CD8-positive, alpha-beta T cell (primary cell): ENCODE measurements at regions of chr1 and their contacts with region 1.

Region 1: GRCh38 chr1:28877132-28877781 is 37.1 kb upstream of the EPB41 start:
- DNase-seq: peak; percentile 49 to 87 (median 80)
- ATAC-seq: peak; percentile 83
- H3K4me3 ChIP-seq: no peak overlapping the region
- H3K4me3 Mint-ChIP-seq: no peak overlapping the region
- H3K27ac ChIP-seq: no peak overlapping the region
- H3K27ac Mint-ChIP-seq: no peak overlapping the region
- H3K4me1 ChIP-seq: no peaks in the 10 kb centered on the region
- H3K4me1 Mint-ChIP-seq: peaks cover 10% of the 10 kb centered on the region
- H3K27me3 ChIP-seq: no peaks in the 10 kb centered on the region
- H3K27me3 Mint-ChIP-seq: peaks cover 9% of the 10 kb centered on the region
- CTCF ChIP-seq: peak; percentile 97

Region 2: GRCh38 chr1:28088168-28088961 is 788.9 kb before region 1 on chr1 and contains the start of gene EYA3:
- CTCF ChIA-PET with region 1: interaction called, 6 read pairs
- POLR2A ChIA-PET with region 1: no interaction called
- intact Hi-C with region 1: loop called (anchors 2 to 5 kb)
- DNase-seq: peak; percentile 97 to 100 (median 99)
- ATAC-seq: peak; percentile 95
- H3K4me3 ChIP-seq: peak within 1 kb of the TSS; percentile 72 to 84
- H3K4me3 Mint-ChIP-seq: peak within 1 kb of the TSS; percentile 85
- H3K27ac ChIP-seq: peak within 1 kb of the TSS; percentile 58 to 89
- H3K27ac Mint-ChIP-seq: peak within 1 kb of the TSS; percentile 97
- H3K4me1 ChIP-seq: peaks cover 25% of the 10 kb centered on the region
- H3K4me1 Mint-ChIP-seq: peaks cover 45% of the 10 kb centered on the region
- H3K27me3 ChIP-seq: no peaks in the 10 kb centered on the region
- H3K27me3 Mint-ChIP-seq: peaks cover 3% of the 10 kb centered on the region
- CTCF ChIP-seq: no peak
- total RNA-seq, gene EYA3: 4.9 to 5.2 TPM

Region 3: DNA sequence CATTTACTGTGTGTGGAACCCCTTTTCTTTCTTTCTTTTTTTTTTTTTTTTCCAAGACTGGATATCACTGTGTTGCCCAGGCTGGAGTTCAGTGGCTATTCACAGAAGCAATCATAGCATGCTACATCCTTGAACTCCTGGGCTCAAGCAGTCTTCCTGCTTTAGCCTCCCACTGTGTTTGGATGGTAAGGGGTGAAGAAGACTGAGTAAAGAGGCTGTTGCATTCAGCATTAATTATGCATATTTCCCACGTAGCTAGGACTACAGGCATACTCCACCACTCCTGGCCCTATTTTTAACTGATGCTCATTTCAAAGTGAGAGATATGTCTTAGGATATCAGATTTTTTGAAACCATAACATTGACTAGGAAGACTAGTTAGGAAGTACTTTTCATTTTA is 468.2 kb before region 1 on chr1:
- CTCF ChIA-PET with region 1: interaction called, 12 read pairs
- POLR2A ChIA-PET with region 1: no interaction called
- intact Hi-C with region 1: loop called (anchors 1 kb)
- DNase-seq: no peak
- ATAC-seq: no peak
- H3K4me3 ChIP-seq: no peak overlapping the region
- H3K4me3 Mint-ChIP-seq: no peak overlapping the region
- H3K27ac ChIP-seq: no peak overlapping the region
- H3K27ac Mint-ChIP-seq: no peak overlapping the region
- H3K4me1 ChIP-seq: no peaks in the 10 kb centered on the region
- H3K4me1 Mint-ChIP-seq: peaks cover 11% of the 10 kb centered on the region
- H3K27me3 ChIP-seq: no peaks in the 10 kb centered on the region
- H3K27me3 Mint-ChIP-seq: no peaks in the 10 kb centered on the region
- CTCF ChIP-seq: no peak

Region 4: GRCh38 chr1:28642847-28643635 is 234.2 kb before region 1 on chr1 and contains the start of gene TAF12:
- CTCF ChIA-PET with region 1: interaction called, 13 read pairs
- POLR2A ChIA-PET with region 1: interaction called, 6 read pairs
- intact Hi-C with region 1: loop called (anchors 1 kb)
- DNase-seq: peak; percentile 87 to 98 (median 91)
- ATAC-seq: peak; percentile 79
- H3K4me3 ChIP-seq: peak within 1 kb of the TSS; percentile 62 to 92
- H3K4me3 Mint-ChIP-seq: peak within 1 kb of the TSS; percentile 100
- H3K27ac ChIP-seq: peak within 1 kb of the TSS; percentile 88 to 90
- H3K27ac Mint-ChIP-seq: peak within 1 kb of the TSS; percentile 99
- H3K4me1 ChIP-seq: peaks cover 34% of the 10 kb centered on the region
- H3K4me1 Mint-ChIP-seq: peaks cover 54% of the 10 kb centered on the region
- H3K27me3 ChIP-seq: no peaks in the 10 kb centered on the region
- H3K27me3 Mint-ChIP-seq: no peaks in the 10 kb centered on the region
- CTCF ChIP-seq: peak; percentile 32
- total RNA-seq, gene TAF12: 7.7 to 8.5 TPM

Region 5: DNA sequence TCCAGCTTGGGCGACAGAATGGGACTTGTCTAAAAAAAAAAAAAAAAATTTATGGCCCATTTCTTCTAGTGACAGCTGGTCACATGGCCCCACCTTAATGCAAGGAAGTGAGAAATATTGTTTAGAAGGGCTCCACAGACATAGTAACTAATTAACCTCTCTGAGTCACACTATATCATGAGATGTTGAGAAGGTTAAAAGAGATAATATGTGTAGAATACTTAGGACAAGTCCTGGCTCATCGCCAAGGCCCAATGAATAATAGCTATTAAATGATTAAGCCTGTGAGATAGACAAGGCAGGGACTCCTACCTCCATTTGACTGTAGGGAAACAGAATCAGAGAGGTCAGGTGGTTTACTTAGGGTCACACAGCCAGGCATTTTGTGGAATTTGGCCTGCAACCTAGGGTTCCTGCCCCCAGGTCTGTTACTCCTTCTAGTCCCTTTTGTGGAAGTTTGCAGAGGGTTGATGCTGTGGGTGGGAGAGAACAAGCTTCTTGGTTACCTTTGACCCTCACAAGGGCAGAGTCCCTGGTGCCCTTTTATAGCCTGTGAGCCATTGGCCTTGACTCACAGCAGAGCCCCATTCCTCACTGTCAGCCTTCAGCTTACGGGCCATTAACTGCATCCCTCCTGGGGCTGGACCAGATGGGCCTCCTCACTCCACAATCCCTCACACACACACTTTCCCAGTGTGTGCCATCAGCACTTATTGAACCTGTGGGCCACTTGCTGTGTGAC is 16.8 kb before region 1 on chr1:
- CTCF ChIA-PET with region 1: interaction called, 21 read pairs
- POLR2A ChIA-PET with region 1: no interaction called
- intact Hi-C with region 1: no loop called
- DNase-seq: no peak
- ATAC-seq: no peak
- H3K4me3 ChIP-seq: no peak overlapping the region
- H3K4me3 Mint-ChIP-seq: no peak overlapping the region
- H3K27ac ChIP-seq: no peak overlapping the region
- H3K27ac Mint-ChIP-seq: no peak overlapping the region
- H3K4me1 ChIP-seq: no peaks in the 10 kb centered on the region
- H3K4me1 Mint-ChIP-seq: no peaks in the 10 kb centered on the region
- H3K27me3 ChIP-seq: no peaks in the 10 kb centered on the region
- H3K27me3 Mint-ChIP-seq: no peaks in the 10 kb centered on the region
- CTCF ChIP-seq: no peak

Region 6: GRCh38 chr1:29050166-29050565 is 172.9 kb after region 1 on chr1:
- CTCF ChIA-PET with region 1: interaction called, 16 read pairs
- POLR2A ChIA-PET with region 1: no interaction called
- intact Hi-C with region 1: no loop called
- DNase-seq: no peak
- ATAC-seq: no peak
- H3K4me3 ChIP-seq: no peak overlapping the region
- H3K4me3 Mint-ChIP-seq: no peak overlapping the region
- H3K27ac ChIP-seq: no peak overlapping the region
- H3K27ac Mint-ChIP-seq: no peak overlapping the region
- H3K4me1 ChIP-seq: no peaks in the 10 kb centered on the region
- H3K4me1 Mint-ChIP-seq: no peaks in the 10 kb centered on the region
- H3K27me3 ChIP-seq: no peaks in the 10 kb centered on the region
- H3K27me3 Mint-ChIP-seq: no peaks in the 10 kb centered on the region
- CTCF ChIP-seq: no peak

Region 7: GRCh38 chr1:29532751-29533150 is 655.5 kb after region 1 on chr1:
- CTCF ChIA-PET with region 1: no interaction called
- POLR2A ChIA-PET with region 1: no interaction called
- intact Hi-C with region 1: no loop called
- DNase-seq: no peak
- ATAC-seq: no peak
- H3K4me3 ChIP-seq: no peak overlapping the region
- H3K4me3 Mint-ChIP-seq: no peak overlapping the region
- H3K27ac ChIP-seq: no peak overlapping the region
- H3K27ac Mint-ChIP-seq: no peak overlapping the region
- H3K4me1 ChIP-seq: no peaks in the 10 kb centered on the region
- H3K4me1 Mint-ChIP-seq: no peaks in the 10 kb centered on the region
- H3K27me3 ChIP-seq: no peaks in the 10 kb centered on the region
- H3K27me3 Mint-ChIP-seq: peaks cover 5% of the 10 kb centered on the region
- CTCF ChIP-seq: no peak

Region 8: DNA sequence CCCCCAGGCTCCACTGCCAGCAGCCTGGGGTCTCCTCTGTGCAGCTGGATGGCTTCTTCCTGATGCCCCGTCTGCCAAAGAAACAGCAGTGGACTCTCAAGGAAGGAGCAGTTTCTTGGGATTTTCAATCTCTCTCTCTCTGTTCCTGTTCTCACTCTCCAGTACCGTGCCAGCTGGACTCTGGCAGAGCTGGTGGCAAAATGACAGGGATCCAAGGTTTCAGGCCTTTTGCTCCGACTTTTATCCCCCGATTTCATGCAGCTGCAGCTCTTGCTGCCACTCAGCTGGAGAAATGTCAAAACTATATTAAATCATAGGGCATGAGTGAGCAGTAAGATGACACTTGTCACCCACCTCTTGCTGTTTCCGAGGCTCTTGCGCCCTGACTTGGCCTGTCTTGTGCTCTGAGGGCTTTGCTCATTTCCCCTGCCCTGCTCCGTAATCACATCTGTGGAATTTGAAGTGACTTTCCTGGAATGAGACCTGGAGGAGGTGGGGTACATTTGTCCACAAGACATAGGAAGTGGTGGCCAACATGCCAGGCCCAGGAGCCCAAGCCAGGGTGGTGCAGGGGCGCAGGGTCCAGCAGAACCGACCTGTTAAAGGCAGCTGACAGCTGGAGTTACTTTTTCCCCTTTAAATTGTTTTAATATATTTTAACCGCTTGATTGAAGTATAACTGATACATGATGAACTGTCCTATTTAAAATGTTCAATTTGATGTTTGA is 935.3 kb after region 1 on chr1:
- CTCF ChIA-PET with region 1: no interaction called
- POLR2A ChIA-PET with region 1: no interaction called
- intact Hi-C with region 1: no loop called
- DNase-seq: peak in 1 of 9 experiments; percentile 36
- ATAC-seq: no peak
- H3K4me3 ChIP-seq: no peak overlapping the region
- H3K4me3 Mint-ChIP-seq: no peak overlapping the region
- H3K27ac ChIP-seq: no peak overlapping the region
- H3K27ac Mint-ChIP-seq: no peak overlapping the region
- H3K4me1 ChIP-seq: no peaks in the 10 kb centered on the region
- H3K4me1 Mint-ChIP-seq: no peaks in the 10 kb centered on the region
- H3K27me3 ChIP-seq: no peaks in the 10 kb centered on the region
- H3K27me3 Mint-ChIP-seq: peaks cover 4% of the 10 kb centered on the region
- CTCF ChIP-seq: no peak

Region 9: DNA sequence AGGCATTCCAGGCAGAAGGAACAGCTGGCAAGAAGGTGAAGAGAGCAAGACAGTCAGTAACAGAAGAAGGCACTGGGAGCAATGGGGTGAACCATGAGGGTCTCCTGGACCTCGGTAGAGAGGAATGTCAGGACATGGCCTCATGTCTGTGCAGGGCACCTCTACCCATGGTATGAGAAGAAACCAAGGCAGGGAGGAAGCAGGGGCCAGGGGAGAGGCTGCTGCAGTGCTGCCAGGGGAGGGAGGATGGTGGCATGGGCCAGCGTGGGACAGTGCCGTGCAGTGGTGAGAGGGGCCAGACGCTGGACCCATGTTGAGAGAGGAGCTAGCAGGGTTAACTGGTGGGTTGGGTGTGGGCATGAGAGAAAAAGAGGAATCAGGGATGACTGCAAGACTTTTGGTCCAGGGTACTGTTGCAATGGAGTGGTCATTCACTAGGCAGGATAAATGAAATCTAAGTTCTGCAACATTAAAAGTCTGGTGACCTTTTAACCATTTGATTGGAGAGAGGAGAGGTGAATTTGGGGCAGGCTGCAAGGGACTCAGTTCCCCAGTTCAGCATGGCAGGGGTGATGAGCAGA is 1268.6 kb after region 1 on chr1:
- CTCF ChIA-PET with region 1: no interaction called
- POLR2A ChIA-PET with region 1: no interaction called
- intact Hi-C with region 1: no loop called
- DNase-seq: peak in 1 of 9 experiments; percentile 13
- ATAC-seq: no peak
- H3K4me3 ChIP-seq: no peak overlapping the region
- H3K4me3 Mint-ChIP-seq: no peak overlapping the region
- H3K27ac ChIP-seq: no peak overlapping the region
- H3K27ac Mint-ChIP-seq: no peak overlapping the region
- H3K4me1 ChIP-seq: no peaks in the 10 kb centered on the region
- H3K4me1 Mint-ChIP-seq: no peaks in the 10 kb centered on the region
- H3K27me3 ChIP-seq: no peaks in the 10 kb centered on the region
- H3K27me3 Mint-ChIP-seq: peaks cover 20% of the 10 kb centered on the region
- CTCF ChIP-seq: no peak